CD14-positive monocyte (primary cell): ENCODE measurements at regions of chr7 and their contacts with region 1.

Region 1: DNA sequence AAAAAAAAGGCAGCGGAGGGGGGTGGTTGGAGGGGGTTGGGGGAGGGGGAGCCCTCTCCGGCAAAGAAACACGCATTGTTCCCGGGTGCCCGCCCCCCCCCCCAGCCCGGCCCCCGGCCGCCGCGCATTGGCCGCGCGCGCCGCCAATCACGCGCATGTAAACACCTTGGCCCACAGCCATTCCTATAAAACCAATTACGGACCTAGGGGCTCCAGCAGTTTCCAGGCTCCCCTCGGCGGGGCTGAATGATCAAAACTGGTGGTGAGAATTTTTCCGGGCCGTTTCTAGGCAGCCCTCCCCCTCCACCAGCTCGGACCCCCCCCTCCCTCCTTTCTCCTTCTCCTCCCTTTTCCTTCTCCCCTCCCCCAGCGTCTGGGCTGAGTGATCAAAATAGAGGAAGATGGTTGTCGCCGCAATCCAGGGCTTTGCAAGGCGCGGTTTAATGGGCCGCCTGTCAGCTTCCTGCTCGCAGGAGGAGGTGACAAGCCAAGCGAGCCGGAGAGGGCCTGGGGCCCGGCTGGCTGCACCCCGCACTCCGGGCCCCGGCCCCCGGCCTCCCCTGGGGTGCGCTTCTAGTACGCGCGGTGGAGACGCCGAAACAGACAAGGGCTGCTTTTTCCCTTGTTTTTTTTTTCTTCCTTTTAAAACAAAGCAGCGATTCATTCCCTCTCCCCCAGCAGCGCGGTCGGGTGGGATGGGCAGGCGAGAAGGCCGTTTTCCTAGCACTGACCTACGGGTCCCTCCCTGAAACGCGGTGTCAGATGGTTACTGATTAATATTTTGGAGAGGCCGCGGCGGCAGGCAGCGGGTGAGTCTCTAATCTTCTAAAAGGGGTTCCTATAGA is 432 bp upstream of the TNRC18 start:
- DNase-seq: peak; percentile 99
- H3K4me3 ChIP-seq: peak overlapping the region; percentile 93 to 100 (median 100)
- H3K4me3 Mint-ChIP-seq: peak overlapping the region; percentile 98 to 99
- H3K27ac ChIP-seq: peak overlapping the region; percentile 92 to 97
- H3K27ac Mint-ChIP-seq: peak overlapping the region; percentile 96 to 98 (median 97)
- H3K4me1 ChIP-seq: peaks cover 16 to 30% of the 10 kb centered on the region in 2 donors
- H3K4me1 Mint-ChIP-seq: peaks cover 20% of the 10 kb centered on the region
- H3K27me3 ChIP-seq: no peaks in the 10 kb centered on the region
- H3K27me3 Mint-ChIP-seq: peaks cover 0 to 2% (median 1%) of the 10 kb centered on the region in 3 donors
- CTCF ChIP-seq: no peak

Region 2: GRCh38 chr7:5077740-5078139 is 346.3 kb before region 1 on chr7:
- intact Hi-C with region 1: no loop called
- DNase-seq: no peak
- H3K4me3 ChIP-seq: no peak overlapping the region
- H3K4me3 Mint-ChIP-seq: no peak overlapping the region
- H3K27ac ChIP-seq: no peak overlapping the region
- H3K27ac Mint-ChIP-seq: no peak overlapping the region
- H3K4me1 ChIP-seq: no peaks in the 10 kb centered on the region
- H3K4me1 Mint-ChIP-seq: peaks cover 4% of the 10 kb centered on the region
- H3K27me3 ChIP-seq: peaks cover 0 to 12% of the 10 kb centered on the region in 2 donors
- H3K27me3 Mint-ChIP-seq: peaks cover 23 to 39% (median 33%) of the 10 kb centered on the region in 3 donors
- CTCF ChIP-seq: no peak

Region 3: DNA sequence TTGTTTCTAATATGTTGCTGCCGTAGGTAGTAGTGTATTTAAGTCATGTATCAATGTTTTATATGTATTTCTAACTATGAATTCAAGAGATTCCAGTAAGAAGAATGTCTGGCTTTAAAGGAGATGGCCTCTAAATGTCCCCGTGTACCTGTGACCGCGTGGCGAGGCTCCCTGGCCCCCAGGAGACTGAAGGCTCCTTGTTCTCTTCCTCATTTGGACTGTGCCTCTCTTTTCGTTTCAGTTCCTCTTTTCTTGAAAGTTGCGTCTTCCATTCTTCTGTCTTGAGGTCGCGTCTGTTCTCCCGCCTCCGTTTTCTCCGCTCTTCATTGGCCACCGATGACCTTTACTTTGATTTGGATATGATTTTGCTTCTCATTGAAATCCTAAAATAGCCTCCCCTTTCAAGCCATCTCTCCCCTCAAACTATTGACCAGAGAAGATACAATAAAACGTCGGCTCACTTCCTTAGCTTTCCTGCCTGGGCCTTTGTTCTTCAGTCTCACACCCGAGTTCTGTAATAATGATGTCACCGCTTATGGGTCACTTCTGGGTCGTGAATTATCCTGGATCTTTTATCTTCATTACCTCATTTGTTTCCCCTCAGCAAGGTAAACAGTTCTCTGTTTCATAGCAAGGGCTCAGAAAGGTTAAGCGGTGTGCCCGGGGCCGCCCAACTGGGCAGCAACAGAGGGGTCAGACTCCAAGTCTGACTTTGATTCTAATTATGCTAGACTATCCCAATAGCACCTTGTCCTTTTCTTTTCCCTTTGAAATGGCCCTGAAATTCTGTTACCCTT is 205.3 kb before region 1 on chr7:
- intact Hi-C with region 1: loop called in 1 of 2 experiments (anchors 2 kb)
- DNase-seq: peak; percentile 84 to 87 (median 86)
- H3K4me3 ChIP-seq: peak overlapping the region in 1 of 3 experiments; percentile 61
- H3K4me3 Mint-ChIP-seq: peak overlapping the region; percentile 65 to 88
- H3K27ac ChIP-seq: peak overlapping the region; percentile 69 to 89
- H3K27ac Mint-ChIP-seq: peak overlapping the region; percentile 95 to 100 (median 99)
- H3K4me1 ChIP-seq: peaks cover 24 to 29% of the 10 kb centered on the region in 2 donors
- H3K4me1 Mint-ChIP-seq: peaks cover 25% of the 10 kb centered on the region
- H3K27me3 ChIP-seq: no peaks in the 10 kb centered on the region
- H3K27me3 Mint-ChIP-seq: peaks cover 0 to 2% (median 0%) of the 10 kb centered on the region in 3 donors
- CTCF ChIP-seq: no peak

Region 4: DNA sequence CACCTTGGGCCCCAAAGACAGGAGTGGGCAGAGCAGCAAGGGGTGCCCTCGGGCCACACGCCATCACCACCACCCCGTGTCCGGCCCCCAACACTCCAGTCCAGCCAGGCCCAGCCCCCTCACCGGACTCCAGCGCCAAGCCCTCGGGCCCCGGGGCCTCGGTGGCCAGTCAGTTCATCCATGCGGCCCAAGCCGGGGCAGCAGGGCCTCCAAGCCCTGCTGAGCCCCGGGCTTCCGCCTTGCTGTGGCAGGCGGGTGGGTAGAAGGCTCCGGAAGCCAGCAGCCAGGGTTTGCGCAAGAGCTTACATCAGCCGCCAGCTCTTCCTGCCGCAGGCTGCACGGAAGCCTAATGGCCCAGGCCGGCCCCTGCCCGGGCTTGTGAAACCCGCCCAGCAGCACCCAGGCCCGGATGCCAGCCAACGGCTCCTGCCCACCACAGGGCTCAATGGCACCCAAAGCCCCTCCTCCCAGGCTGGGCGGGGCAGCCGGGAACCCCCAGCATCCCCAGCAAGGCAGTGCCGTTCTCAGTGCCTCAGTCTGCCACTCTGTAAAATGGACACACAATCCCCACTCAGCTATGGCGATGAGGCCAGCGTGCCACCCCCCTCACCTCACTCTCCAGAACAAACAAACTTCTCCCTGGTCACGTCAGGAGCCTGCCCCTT is 26.9 kb before region 1 on chr7:
- intact Hi-C with region 1: loop called in 1 of 2 experiments (anchors 2 kb)
- DNase-seq: peak; percentile 97 to 99 (median 99)
- H3K4me3 ChIP-seq: peak overlapping the region; percentile 59 to 84 (median 66)
- H3K4me3 Mint-ChIP-seq: peak overlapping the region; percentile 75 to 84
- H3K27ac ChIP-seq: peak overlapping the region; percentile 68 to 94
- H3K27ac Mint-ChIP-seq: peak overlapping the region; percentile 94 to 99 (median 98)
- H3K4me1 ChIP-seq: peaks cover 30 to 33% of the 10 kb centered on the region in 2 donors
- H3K4me1 Mint-ChIP-seq: peaks cover 44% of the 10 kb centered on the region
- H3K27me3 ChIP-seq: no peaks in the 10 kb centered on the region
- H3K27me3 Mint-ChIP-seq: peaks cover 0 to 2% (median 0%) of the 10 kb centered on the region in 3 donors
- CTCF ChIP-seq: no peak

Region 5: GRCh38 chr7:5477723-5478531 is 53.9 kb after region 1 on chr7:
- intact Hi-C with region 1: no loop called
- DNase-seq: peak; percentile 44 to 49 (median 45)
- H3K4me3 ChIP-seq: peak overlapping the region; percentile 52 to 77 (median 68)
- H3K4me3 Mint-ChIP-seq: peak overlapping the region; percentile 84 to 93
- H3K27ac ChIP-seq: peak overlapping the region in 1 of 2 donors; percentile 17
- H3K27ac Mint-ChIP-seq: peak overlapping the region in 4 of 7 donors; percentile 46 to 68 (median 61)
- H3K4me1 ChIP-seq: peaks cover 15 to 21% of the 10 kb centered on the region in 2 donors
- H3K4me1 Mint-ChIP-seq: peaks cover 23% of the 10 kb centered on the region
- H3K27me3 ChIP-seq: no peaks in the 10 kb centered on the region
- H3K27me3 Mint-ChIP-seq: peaks cover 3 to 4% (median 3%) of the 10 kb centered on the region in 3 donors
- CTCF ChIP-seq: peak; percentile 71

Region 6: DNA sequence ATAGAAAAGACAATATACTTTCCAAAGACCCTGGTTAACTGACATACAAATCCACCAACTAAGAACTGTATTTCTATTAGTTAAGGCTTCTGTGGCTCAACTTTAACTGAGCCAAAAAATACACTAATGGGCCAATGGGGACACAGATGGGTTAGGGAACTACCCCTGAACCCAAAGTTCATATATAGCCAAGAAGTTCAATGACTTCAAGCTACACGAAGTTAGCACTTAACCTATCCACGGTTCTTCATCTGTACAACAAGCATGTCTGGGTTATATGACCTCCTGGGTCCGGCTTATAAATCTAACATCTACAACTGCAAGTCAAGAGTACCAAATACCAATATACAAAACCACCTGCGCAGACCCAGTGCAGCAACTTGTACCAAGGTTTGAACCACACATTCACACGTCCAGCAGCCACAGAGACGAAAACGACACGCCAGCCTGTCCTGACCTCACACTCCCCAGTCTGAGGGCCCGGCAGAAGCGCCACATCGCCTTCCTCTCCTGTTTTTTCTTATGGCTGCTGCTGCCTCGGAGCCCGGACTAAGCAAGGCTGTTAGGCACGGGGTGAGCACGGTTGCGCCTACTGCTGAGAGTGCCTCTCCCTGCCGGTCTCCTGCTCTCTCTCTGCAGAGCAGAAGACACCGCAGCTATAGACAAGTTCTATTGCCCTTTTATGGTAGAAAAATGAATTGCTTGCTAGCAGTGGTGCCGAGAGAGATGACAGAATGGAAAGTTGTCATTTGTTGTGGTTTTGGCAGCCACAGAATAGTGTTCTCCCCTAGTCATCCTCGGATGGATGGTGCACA is 271.1 kb after region 1 on chr7:
- intact Hi-C with region 1: loop called in 1 of 2 experiments (anchors 5 kb)
- DNase-seq: peak in 1 of 3 donors; percentile 52
- H3K4me3 ChIP-seq: peak overlapping the region in 1 of 3 experiments; percentile 45
- H3K4me3 Mint-ChIP-seq: peak overlapping the region; percentile 64 to 66
- H3K27ac ChIP-seq: peak overlapping the region; percentile 79 to 99
- H3K27ac Mint-ChIP-seq: peak overlapping the region; percentile 97 to 100 (median 99)
- H3K4me1 ChIP-seq: peaks cover 77 to 83% of the 10 kb centered on the region in 2 donors
- H3K4me1 Mint-ChIP-seq: peaks cover 88% of the 10 kb centered on the region
- H3K27me3 ChIP-seq: no peaks in the 10 kb centered on the region
- H3K27me3 Mint-ChIP-seq: peaks cover 0 to 2% (median 0%) of the 10 kb centered on the region in 3 donors
- CTCF ChIP-seq: no peak